Heart right ventricle (tissue), 16 donors: ENCODE measurements at regions of chr3 and their contacts with region 1.

Region 1: DNA sequence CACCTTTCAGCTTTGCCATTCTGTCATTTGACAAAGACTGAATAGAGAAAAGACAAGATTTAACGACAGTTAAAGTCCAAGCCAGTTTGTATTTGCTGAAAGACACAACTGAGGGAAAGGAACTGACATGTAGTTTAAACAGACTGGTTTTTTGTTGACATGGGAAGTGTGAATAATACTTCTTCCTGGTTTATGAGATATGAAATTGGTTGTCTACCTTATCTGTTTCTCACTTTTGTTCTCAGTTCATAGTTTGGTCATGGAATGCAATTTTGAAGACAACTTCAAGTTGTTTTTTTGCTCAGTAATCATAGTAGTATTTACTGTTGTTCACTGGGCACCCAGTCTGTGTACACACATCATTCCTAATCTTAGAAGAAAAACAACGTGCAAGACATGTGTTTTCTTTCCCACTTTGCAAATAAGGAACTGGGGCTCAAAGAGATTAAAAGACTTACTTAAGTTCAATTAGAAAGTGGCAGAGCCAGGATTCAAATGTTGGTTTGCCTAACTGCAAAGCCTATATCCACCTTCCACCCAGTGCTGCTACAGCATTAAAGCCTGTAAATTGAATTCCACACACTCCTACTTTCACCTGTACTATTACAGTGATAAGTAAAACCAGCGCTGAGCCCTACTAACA is 103.5 kb downstream of the LPP start:
- DNase-seq: no peak
- ATAC-seq: no peak
- H3K4me3 ChIP-seq: no peak overlapping the region
- H3K27ac ChIP-seq: peak overlapping the region in 9 of 10 donors; percentile 11 to 86 (median 49)
- H3K4me1 ChIP-seq: peaks cover 6 to 66% (median 47%) of the 10 kb centered on the region in 9 donors
- H3K27me3 ChIP-seq: no peaks in the 10 kb centered on the region
- CTCF ChIP-seq: no peak

Region 2: DNA sequence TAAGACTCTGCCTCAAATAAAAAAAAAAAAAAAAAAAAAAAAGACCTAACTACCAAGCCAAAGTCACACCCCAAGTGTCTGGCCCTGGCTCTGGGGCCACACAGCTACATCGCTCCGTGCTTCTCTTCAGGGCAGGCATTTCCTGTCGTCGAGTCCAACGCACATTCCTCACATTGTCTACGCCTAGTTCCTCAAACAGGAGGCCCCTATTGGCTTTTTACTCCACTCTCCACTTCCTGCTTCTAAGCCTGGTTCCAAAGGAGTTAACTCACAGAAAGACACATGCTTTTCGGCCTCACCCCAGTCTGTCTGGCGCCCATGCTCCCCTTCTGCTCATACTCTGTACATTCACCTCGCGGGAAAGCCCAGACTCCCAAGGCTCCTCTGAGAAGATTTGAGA is 1511.5 kb before region 1 on chr3:
- intact Hi-C with region 1: no loop called
- DNase-seq: peak in 1 of 2 donors; percentile 26
- ATAC-seq: peak; percentile 64 to 94 (median 80)
- H3K4me3 ChIP-seq: no peak overlapping the region
- H3K27ac ChIP-seq: no peak overlapping the region
- H3K4me1 ChIP-seq: peaks cover 0 to 7% (median 0%) of the 10 kb centered on the region in 9 donors
- H3K27me3 ChIP-seq: no peaks in the 10 kb centered on the region
- CTCF ChIP-seq: no peak

Region 3: GRCh38 chr3:187955076-187955952 is 302.2 kb before region 1 on chr3:
- intact Hi-C with region 1: loop called in 2 of 10 experiments (anchors 10 kb)
- DNase-seq: no peak
- ATAC-seq: peak; percentile 17 to 77 (median 32)
- H3K4me3 ChIP-seq: no peak overlapping the region
- H3K27ac ChIP-seq: peak overlapping the region in 7 of 10 donors; percentile 28 to 81 (median 42)
- H3K4me1 ChIP-seq: peaks cover 0 to 81% (median 35%) of the 10 kb centered on the region in 9 donors
- H3K27me3 ChIP-seq: no peaks in the 10 kb centered on the region
- CTCF ChIP-seq: no peak

Region 4: GRCh38 chr3:188309437-188310269 is 52.1 kb after region 1 on chr3:
- intact Hi-C with region 1: no loop called
- DNase-seq: no peak
- ATAC-seq: no peak
- H3K4me3 ChIP-seq: no peak overlapping the region
- H3K27ac ChIP-seq: no peak overlapping the region
- H3K4me1 ChIP-seq: peaks cover 0 to 21% (median 5%) of the 10 kb centered on the region in 9 donors
- H3K27me3 ChIP-seq: no peaks in the 10 kb centered on the region
- CTCF ChIP-seq: no peak

Region 5: DNA sequence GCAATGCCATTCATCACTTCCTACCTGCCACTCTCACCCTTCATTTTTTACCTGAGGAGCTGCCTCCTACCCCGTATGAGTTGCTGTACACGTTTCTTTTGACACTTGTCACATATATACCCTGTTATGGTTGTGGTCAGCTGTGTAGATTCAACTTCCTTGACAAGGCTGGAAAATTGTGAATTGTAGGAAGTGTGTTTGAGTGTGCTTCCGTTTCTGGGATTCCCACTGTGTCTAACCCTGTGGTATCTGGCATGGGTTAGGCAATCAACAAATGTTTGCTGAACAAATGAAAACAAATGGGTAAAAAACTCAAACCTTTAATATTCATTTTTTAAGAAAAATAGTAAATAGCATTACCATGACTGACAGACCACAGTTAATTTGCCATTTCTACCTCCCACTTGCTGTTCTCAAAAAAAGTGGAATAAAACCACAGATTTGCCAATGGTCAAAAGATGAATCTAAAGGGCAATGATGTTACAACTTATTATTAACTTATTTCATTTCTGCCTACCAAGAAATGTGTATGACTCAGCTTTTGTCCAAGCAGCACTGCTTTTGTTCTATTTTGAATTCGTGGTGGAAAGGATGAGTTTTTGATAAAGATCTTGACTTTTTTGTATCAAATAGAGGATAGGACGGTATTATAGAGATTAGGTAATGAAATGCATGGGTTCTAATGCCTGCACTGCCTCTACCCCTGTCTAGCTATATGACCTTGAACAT is 301.0 kb after region 1 on chr3:
- intact Hi-C with region 1: no loop called
- DNase-seq: no peak
- ATAC-seq: peak in 1 of 8 donors; percentile 27
- H3K4me3 ChIP-seq: no peak overlapping the region
- H3K27ac ChIP-seq: peak overlapping the region in 1 of 10 donors; percentile 52
- H3K4me1 ChIP-seq: peaks cover 0 to 58% (median 21%) of the 10 kb centered on the region in 9 donors
- H3K27me3 ChIP-seq: no peaks in the 10 kb centered on the region
- CTCF ChIP-seq: no peak